Panc1 (cell line): ENCODE measurements at regions of chr17 and their contacts with region 1.

Region 1: GRCh38 chr17:62906881-62907280 is 59.2 kb upstream of the TANC2 start:
- DNase-seq: no peak
- ATAC-seq: no peak
- H3K4me3 ChIP-seq: no peak overlapping the region
- H3K27ac ChIP-seq: no peak overlapping the region
- H3K4me1 ChIP-seq: no peaks in the 10 kb centered on the region
- H3K27me3 ChIP-seq: no peaks in the 10 kb centered on the region
- CTCF ChIP-seq: no peak

Region 2: GRCh38 chr17:62916681-62917571 is 10.0 kb after region 1 on chr17:
- CTCF ChIA-PET with region 1: no interaction called
- POLR2A ChIA-PET with region 1: no interaction called
- in situ Hi-C with region 1: no loop called
- intact Hi-C with region 1: no loop called
- DNase-seq: no peak
- ATAC-seq: no peak
- H3K4me3 ChIP-seq: no peak overlapping the region
- H3K27ac ChIP-seq: no peak overlapping the region
- H3K4me1 ChIP-seq: no peaks in the 10 kb centered on the region
- H3K27me3 ChIP-seq: no peaks in the 10 kb centered on the region
- CTCF ChIP-seq: no peak

Region 3: GRCh38 chr17:62949036-62949435 is 42.2 kb after region 1 on chr17:
- CTCF ChIA-PET with region 1: interaction called, 21 read pairs
- POLR2A ChIA-PET with region 1: no interaction called
- in situ Hi-C with region 1: no loop called
- intact Hi-C with region 1: no loop called
- DNase-seq: no peak
- ATAC-seq: no peak
- H3K4me3 ChIP-seq: no peak overlapping the region
- H3K27ac ChIP-seq: peak overlapping the region; percentile 10; the same call in 1 of the 2 replicates
- H3K4me1 ChIP-seq: no peaks in the 10 kb centered on the region
- H3K27me3 ChIP-seq: no peaks in the 10 kb centered on the region
- CTCF ChIP-seq: no peak

Region 4: GRCh38 chr17:63035271-63035670 is 128.4 kb after region 1 on chr17:
- CTCF ChIA-PET with region 1: no interaction called
- POLR2A ChIA-PET with region 1: no interaction called
- in situ Hi-C with region 1: no loop called
- intact Hi-C with region 1: no loop called
- DNase-seq: no peak
- ATAC-seq: no peak
- H3K4me3 ChIP-seq: no peak overlapping the region
- H3K27ac ChIP-seq: no peak overlapping the region
- H3K4me1 ChIP-seq: peaks cover 18% of the 10 kb centered on the region
- H3K27me3 ChIP-seq: no peaks in the 10 kb centered on the region
- CTCF ChIP-seq: no peak